ENCODE measurements at regions of chr22 and their contacts with region 1.

Region 1: GRCh38 chr22:34105461-34106062 is 185.3 kb upstream of the LARGE1 start:
- DNase-seq: peak; percentile 77 to 81
- H3K4me3 ChIP-seq: no peak overlapping the region
- H3K27ac ChIP-seq: no peak overlapping the region
- H3K4me1 ChIP-seq: peaks cover 0 to 8% (median 7%) of the 10 kb centered on the region in 4 donors
- H3K27me3 ChIP-seq: peaks cover 0 to 10% (median 0%) of the 10 kb centered on the region in 3 donors
- CTCF ChIP-seq: peak in 5 of 7 experiments; percentile 52 to 80 (median 64)
- EP300 ChIP-seq: no peak
- POLR2A ChIP-seq: no peak

Region 2: GRCh38 chr22:33756508-33756949 is 349.0 kb before region 1 on chr22:
- intact Hi-C with region 1: loop called (anchors 10 kb)
- DNase-seq: peak in 1 of 2 donors; percentile 55
- H3K4me3 ChIP-seq: no peak overlapping the region
- H3K27ac ChIP-seq: no peak overlapping the region
- H3K4me1 ChIP-seq: peaks cover 0 to 26% (median 3%) of the 10 kb centered on the region in 4 donors
- H3K27me3 ChIP-seq: no peaks in the 10 kb centered on the region
- CTCF ChIP-seq: no peak
- EP300 ChIP-seq: no peak
- POLR2A ChIP-seq: no peak

Region 3: GRCh38 chr22:33925194-33925593 is 180.4 kb before region 1 on chr22:
- intact Hi-C with region 1: loop called (anchors 5 kb)
- DNase-seq: no peak
- H3K4me3 ChIP-seq: no peak overlapping the region
- H3K27ac ChIP-seq: no peak overlapping the region
- H3K4me1 ChIP-seq: peaks cover 0 to 19% (median 15%) of the 10 kb centered on the region in 4 donors
- H3K27me3 ChIP-seq: peaks cover 0 to 8% (median 0%) of the 10 kb centered on the region in 3 donors
- CTCF ChIP-seq: no peak
- EP300 ChIP-seq: no peak
- POLR2A ChIP-seq: no peak

Region 4: GRCh38 chr22:34294991-34295390 is 189.4 kb after region 1 on chr22:
- intact Hi-C with region 1: no loop called
- DNase-seq: peak in 1 of 2 donors; percentile 26
- H3K4me3 ChIP-seq: no peak overlapping the region
- H3K27ac ChIP-seq: no peak overlapping the region
- H3K4me1 ChIP-seq: no peaks in the 10 kb centered on the region
- H3K27me3 ChIP-seq: no peaks in the 10 kb centered on the region
- CTCF ChIP-seq: no peak
- EP300 ChIP-seq: no peak
- POLR2A ChIP-seq: no peak

Measured in stomach (tissue), 19 donors.